ENCODE measurements at regions of chr1 and their contacts with region 1.

Region 1: DNA sequence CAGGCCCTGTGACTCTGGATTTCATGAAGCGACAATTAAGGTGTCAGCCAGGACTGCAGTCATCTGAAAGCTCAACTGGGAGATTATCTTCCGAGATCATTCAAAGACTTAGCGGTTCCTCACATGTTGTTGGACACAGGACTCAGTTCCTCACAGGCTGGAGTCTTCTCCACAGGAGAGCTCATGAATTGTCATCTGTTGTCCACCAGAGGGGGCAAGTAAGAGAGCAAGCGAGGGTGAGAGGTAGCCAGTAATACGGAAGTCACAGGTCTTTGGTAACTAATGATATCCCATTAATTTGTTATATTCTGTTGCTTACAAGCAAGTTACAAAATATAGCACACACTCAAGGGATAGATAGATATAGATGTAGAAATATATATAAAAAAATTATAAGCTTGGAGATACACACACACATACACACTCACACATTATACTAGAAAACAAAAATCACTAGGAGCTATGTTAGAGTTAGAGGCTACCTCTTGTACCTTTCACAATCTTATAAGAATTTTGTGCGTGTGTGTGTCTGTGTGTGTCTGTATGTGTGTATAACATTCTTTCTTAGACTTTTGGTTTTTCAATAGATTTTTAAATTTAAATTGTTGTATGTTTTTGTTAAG is 1695.3 kb downstream of the BRINP3 start:
- DNase-seq: peak; percentile 16
- H3K4me3 ChIP-seq: no peak overlapping the region
- H3K27ac ChIP-seq: no peak overlapping the region
- H3K27me3 ChIP-seq: no peaks in the 10 kb centered on the region
- CTCF ChIP-seq: peak; percentile 76

Region 2: GRCh38 chr1:188723332-188724020 is 58.9 kb before region 1 on chr1:
- CTCF ChIA-PET with region 1: no interaction called
- POLR2A ChIA-PET with region 1: no interaction called
- DNase-seq: no peak
- H3K4me3 ChIP-seq: no peak overlapping the region
- H3K27ac ChIP-seq: no peak overlapping the region
- H3K27me3 ChIP-seq: no peaks in the 10 kb centered on the region
- CTCF ChIP-seq: no peak

Region 3: GRCh38 chr1:188769181-188769580 is 13.1 kb before region 1 on chr1:
- CTCF ChIA-PET with region 1: interaction called, 39 read pairs
- POLR2A ChIA-PET with region 1: no interaction called
- DNase-seq: no peak
- H3K4me3 ChIP-seq: no peak overlapping the region
- H3K27ac ChIP-seq: no peak overlapping the region
- H3K27me3 ChIP-seq: no peaks in the 10 kb centered on the region
- CTCF ChIP-seq: no peak

Region 4: DNA sequence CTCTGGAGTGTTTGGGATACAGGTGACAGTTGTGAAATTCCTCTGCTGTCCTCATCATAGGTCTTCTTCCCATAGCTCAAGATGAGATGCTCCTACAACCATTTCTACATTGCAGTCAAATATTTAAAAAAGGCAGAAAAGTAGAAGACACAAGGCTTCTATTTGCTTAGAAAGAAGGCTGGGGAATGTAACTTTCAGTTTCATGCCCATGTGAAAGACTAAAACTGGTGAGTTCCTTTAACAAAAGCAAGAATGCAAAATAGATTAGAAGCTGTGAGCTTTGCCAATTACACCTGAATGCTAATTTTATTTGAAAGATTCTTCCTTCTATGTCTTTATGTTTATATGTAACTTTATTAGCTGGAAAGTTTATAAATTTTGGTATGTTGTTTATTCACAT is 12.6 kb after region 1 on chr1:
- CTCF ChIA-PET with region 1: interaction called, 20 read pairs
- POLR2A ChIA-PET with region 1: no interaction called
- DNase-seq: no peak
- H3K4me3 ChIP-seq: no peak overlapping the region
- H3K27ac ChIP-seq: no peak overlapping the region
- H3K27me3 ChIP-seq: no peaks in the 10 kb centered on the region
- CTCF ChIP-seq: no peak

Region 5: DNA sequence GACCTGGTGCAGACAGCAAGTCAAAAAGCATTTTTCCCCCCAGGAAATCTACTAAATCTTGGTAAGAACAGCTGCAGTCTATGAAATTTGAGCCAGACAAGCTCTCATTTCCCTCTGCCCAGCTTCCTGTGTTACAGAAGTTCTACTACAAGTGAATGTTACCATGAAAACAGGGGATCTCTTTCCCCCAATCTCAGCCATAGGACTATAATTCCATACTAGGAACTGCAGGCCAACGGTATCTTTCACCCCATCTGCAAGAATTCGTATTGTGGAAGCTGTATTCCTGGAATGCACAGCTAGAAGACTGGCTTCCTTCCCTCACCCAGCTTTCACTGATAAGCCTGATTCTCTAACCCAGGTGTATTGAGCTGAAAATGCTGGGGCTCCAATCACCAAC is 39.9 kb after region 1 on chr1:
- CTCF ChIA-PET with region 1: interaction called, 16 read pairs
- POLR2A ChIA-PET with region 1: no interaction called
- DNase-seq: no peak
- H3K4me3 ChIP-seq: no peak overlapping the region
- H3K27ac ChIP-seq: no peak overlapping the region
- H3K27me3 ChIP-seq: no peaks in the 10 kb centered on the region
- CTCF ChIP-seq: no peak